ENCODE measurements at regions of chr16 and their contacts with region 1.

Region 1: GRCh38 chr16:3879887-3880564 is 487 bp downstream of the CREBBP start:
- DNase-seq: peak; percentile 67 to 88
- H3K4me3 ChIP-seq: peak overlapping the region; percentile 97 to 99
- H3K27ac ChIP-seq: peak overlapping the region; percentile 79 to 93
- H3K4me1 ChIP-seq: peaks cover 0 to 46% (median 36%) of the 10 kb centered on the region in 4 donors
- H3K27me3 ChIP-seq: no peaks in the 10 kb centered on the region
- CTCF ChIP-seq: no peak

Region 2: DNA sequence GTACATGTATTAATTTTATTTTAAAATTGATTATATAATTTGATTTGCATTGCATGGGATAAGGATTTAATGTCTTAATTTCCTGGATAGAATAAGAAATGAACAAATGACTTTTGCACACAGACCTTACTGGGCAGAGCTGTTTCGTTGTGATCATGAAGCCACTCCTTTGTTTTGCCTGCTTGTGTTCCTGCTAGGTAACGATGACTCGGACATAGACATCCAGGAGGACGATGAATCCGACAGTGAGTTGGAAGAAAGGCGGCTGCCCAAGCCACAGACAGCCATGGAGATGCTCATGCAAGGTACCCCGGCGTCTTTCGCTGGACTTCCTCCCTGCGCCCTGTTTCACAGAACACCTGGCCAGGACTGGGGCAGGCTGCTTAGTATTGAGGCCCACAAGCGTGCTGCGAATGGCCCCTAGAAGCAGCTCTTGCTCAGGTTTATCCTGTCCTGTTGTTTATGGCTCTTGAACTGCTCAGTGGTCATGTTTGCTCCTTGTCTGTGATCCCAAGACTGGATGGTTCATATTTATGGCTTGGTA is 349.6 kb before region 1 on chr16:
- intact Hi-C with region 1: loop called (anchors 5 kb)
- DNase-seq: no peak
- H3K4me3 ChIP-seq: no peak overlapping the region
- H3K27ac ChIP-seq: no peak overlapping the region
- H3K4me1 ChIP-seq: peaks cover 0 to 10% (median 5%) of the 10 kb centered on the region in 4 donors
- H3K27me3 ChIP-seq: no peaks in the 10 kb centered on the region
- CTCF ChIP-seq: no peak

Region 3: GRCh38 chr16:3690470-3690928 is 189.5 kb before region 1 on chr16:
- intact Hi-C with region 1: loop called (anchors 5 kb)
- DNase-seq: peak; percentile 96
- H3K4me3 ChIP-seq: peak overlapping the region; percentile 36 to 48
- H3K27ac ChIP-seq: peak overlapping the region; percentile 41 to 59
- H3K4me1 ChIP-seq: peaks cover 0 to 14% (median 6%) of the 10 kb centered on the region in 4 donors
- H3K27me3 ChIP-seq: no peaks in the 10 kb centered on the region
- CTCF ChIP-seq: peak; percentile 92 to 95

Region 4: DNA sequence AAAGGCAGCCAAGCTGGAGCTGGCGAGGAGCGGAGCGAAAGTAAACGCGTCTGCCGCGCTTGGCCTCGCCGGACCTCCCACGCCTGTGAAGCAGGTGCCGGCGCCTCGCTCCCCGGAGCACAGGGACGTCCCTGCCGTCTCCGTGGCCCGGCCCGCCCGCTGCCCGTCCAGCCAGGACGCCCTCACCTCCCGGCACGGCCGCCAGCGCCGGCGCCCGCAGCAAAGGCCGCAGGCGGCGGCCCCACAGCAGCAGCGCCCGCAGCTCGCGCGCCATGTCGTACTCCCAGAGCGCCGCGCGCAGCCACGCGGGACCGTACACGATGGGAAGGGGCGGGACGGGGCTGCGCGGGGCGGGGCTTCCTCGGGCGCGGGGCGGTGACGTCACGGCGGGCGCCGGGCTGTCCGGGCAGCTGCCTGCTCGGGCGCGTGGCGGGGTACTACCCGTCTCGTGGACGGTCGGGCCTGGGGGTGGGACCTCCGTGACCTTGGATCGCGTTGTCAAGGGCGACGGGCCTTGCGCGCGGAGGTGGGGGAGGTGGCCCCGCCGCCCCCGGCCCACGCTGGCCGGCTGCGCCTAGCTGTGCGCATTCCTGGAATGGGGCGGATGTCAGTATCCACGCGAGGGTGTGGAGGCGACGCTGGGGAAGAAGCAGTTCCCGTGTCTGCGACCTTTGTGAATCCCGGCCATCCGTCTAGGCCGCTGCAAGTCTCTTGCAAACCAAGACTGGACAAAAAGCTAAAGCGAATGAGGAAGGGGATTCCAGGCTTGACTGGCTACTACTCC is 162.6 kb before region 1 on chr16 and contains the start of gene TRAP1:
- intact Hi-C with region 1: loop called (anchors 2 kb)
- DNase-seq: peak; percentile 81 to 93
- H3K4me3 ChIP-seq: peak within 1 kb of the TSS; percentile 97 to 99
- H3K27ac ChIP-seq: peak within 1 kb of the TSS; percentile 90 to 92
- H3K4me1 ChIP-seq: peaks cover 0 to 15% (median 12%) of the 10 kb centered on the region in 4 donors
- H3K27me3 ChIP-seq: no peaks in the 10 kb centered on the region
- CTCF ChIP-seq: peak in 1 of 2 experiments; percentile 11

Region 5: GRCh38 chr16:4208341-4208751 is 328.3 kb after region 1 on chr16:
- intact Hi-C with region 1: no loop called
- DNase-seq: no peak
- H3K4me3 ChIP-seq: no peak overlapping the region
- H3K27ac ChIP-seq: no peak overlapping the region
- H3K4me1 ChIP-seq: peaks cover 0 to 42% (median 18%) of the 10 kb centered on the region in 4 donors
- H3K27me3 ChIP-seq: no peaks in the 10 kb centered on the region
- CTCF ChIP-seq: no peak

Measured in tibial artery (tissue), 4 donors.